Common myeloid progenitor, CD34-positive (primary cell): ENCODE measurements at regions of chr13 and their contacts with region 1.

Region 1: DNA sequence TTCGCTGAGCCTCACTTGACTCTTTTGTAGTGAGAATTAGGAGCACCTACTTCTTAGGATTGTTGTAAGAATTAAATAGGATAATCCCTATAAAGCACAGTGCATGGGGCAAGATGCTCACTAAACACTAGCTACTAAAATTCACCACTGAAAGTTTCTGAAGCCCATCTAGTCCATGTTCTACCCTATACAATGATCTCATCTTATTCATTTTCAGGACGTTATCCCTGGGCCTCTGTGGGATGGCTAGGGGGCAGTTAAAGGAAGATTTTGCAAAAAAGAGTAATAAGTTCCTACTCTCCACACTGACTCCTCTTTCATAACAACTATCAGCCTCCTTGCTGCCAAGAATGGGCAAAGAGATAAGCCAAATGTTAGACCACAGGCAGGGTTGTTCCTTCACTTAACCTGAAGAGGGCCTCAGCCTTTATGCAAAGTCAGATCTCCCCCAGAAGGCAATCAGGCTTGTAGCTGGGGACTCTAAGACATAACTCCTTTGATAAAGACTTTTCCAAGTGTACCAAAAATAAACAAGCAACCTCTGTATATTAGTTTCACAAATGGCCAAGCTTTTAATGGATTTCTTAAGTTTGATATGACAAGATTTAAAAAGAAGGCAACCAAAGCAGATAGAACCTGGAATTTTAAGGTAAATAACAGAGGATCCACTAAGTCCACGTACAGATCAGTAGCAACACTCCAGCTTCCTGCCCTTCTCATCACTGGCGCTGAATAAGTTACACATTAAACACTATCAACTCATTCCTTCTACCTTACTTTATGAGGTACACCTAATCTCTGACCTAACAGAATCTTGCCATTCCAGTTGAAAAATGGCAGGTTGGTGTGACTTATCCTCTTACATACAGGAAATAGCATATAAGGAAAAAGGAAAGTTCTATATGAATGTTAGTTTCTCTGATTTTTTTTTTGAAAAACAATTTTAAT is 44.4 kb downstream of the ELF1 start:
- DNase-seq: peak; percentile 84 to 90 (median 88)
- H3K4me3 ChIP-seq: peak overlapping the region in 4 of 7 experiments; percentile 11 to 50 (median 30)
- H3K27ac ChIP-seq: peak overlapping the region in 1 of 2 experiments; percentile 62
- H3K4me1 ChIP-seq: peaks cover 49 to 88% (median 68%) of the 10 kb centered on the region in 4 experiments
- H3K27me3 ChIP-seq: no peaks in the 10 kb centered on the region

Region 2: GRCh38 chr13:40963919-40964318 is 10.8 kb before region 1 on chr13:
- CTCF ChIA-PET with region 1: interaction called, 22 read pairs
- POLR2A ChIA-PET with region 1: interaction called, 3 read pairs
- DNase-seq: peak in 1 of 3 donors; percentile 49
- H3K4me3 ChIP-seq: no peak overlapping the region
- H3K27ac ChIP-seq: peak overlapping the region in 1 of 2 experiments; percentile 5
- H3K4me1 ChIP-seq: peaks cover 38 to 84% (median 60%) of the 10 kb centered on the region in 4 experiments
- H3K27me3 ChIP-seq: no peaks in the 10 kb centered on the region

Region 3: DNA sequence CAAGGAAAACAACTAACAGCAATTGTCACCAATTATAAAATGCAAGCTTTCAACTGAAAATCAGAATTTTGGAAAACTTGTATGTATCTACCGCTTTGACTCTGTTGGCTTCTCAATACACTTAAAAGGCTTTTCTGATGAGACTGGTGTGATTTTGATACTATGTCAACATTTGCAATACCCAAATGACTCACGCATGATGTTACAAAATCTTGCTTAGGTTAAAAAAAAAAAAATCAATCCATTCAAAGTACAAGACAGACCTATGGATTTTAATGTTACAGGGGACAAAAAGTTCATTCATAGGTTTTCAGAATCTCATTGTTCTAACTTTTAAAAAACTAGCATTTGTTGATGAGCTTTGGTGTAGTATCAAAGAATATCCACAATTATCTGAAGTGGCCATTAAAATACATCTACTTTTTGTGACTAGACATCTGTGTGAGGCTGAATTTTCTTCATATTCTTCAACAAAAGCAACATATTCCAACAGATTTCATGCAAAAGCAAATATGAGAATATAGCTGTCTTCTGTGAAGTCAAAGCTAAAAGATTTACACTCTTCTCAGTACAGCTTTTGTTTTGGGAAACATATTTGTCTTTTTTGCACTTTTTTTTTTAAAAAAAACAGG is 33.7 kb after region 1 on chr13:
- CTCF ChIA-PET with region 1: interaction called, 11 read pairs
- POLR2A ChIA-PET with region 1: interaction called, 3 read pairs
- DNase-seq: peak in 2 of 3 donors; percentile 61 to 71
- H3K4me3 ChIP-seq: peak overlapping the region in 1 of 7 experiments; percentile 47
- H3K27ac ChIP-seq: peak overlapping the region; percentile 59 to 92
- H3K4me1 ChIP-seq: peaks cover 52 to 84% (median 69%) of the 10 kb centered on the region in 4 experiments
- H3K27me3 ChIP-seq: no peaks in the 10 kb centered on the region

Region 4: DNA sequence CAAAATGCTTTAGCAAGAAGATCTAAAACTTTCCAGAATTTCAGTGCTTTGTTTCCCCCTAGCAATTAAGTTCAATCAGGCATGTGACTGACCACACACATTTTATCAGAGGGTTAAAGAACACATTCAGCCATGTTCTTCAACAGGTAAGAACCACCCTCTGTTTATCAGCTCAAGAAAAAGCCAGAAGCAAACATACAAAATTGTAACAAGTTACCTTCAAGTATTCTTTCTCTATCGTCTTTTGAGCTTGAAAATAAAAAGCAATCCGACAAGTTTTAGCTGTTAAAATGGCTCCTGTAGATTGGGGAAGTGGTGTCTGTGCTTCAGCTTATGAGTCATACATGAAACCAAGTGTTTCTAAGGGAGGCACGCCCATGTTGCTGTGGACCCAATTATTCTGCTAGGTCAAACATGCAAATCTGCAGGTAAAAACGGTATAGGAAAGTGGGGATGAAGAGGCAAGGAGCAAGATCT is 44.3 kb after region 1 on chr13 and contains the start of gene ELF1:
- CTCF ChIA-PET with region 1: interaction called, 10 read pairs
- POLR2A ChIA-PET with region 1: no interaction called
- DNase-seq: peak; percentile 92 to 96 (median 95)
- H3K4me3 ChIP-seq: peak within 1 kb of the TSS in 6 of 7 experiments; percentile 69 to 100 (median 88)
- H3K27ac ChIP-seq: peak within 1 kb of the TSS; percentile 100
- H3K4me1 ChIP-seq: peaks cover 25 to 53% (median 35%) of the 10 kb centered on the region in 4 experiments
- H3K27me3 ChIP-seq: no peaks in the 10 kb centered on the region

Region 5: DNA sequence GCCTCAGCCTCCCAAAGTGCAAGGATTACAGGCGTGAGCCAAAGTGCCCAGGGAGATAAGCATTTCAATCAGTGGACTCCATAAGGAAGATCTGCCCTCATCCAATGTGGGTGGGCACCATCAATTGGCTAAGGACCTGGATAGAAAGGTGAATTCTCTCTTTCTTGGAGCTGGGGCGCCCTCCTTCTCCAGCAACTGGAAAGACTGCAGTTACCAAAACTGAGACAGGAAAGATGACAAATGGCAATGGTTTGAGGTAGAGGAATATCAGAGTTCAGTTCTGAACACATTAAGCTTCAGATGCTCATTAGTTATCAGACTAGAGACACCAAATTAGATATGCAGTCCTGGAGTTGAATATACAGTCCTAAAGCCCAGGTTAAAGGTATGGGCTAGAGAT is 54.9 kb after region 1 on chr13:
- CTCF ChIA-PET with region 1: interaction called, 15 read pairs
- POLR2A ChIA-PET with region 1: no interaction called
- DNase-seq: peak; percentile 43 to 55 (median 52)
- H3K4me3 ChIP-seq: no peak overlapping the region
- H3K27ac ChIP-seq: no peak overlapping the region
- H3K4me1 ChIP-seq: peaks cover 3 to 16% (median 10%) of the 10 kb centered on the region in 4 experiments
- H3K27me3 ChIP-seq: no peaks in the 10 kb centered on the region

Region 6: GRCh38 chr13:41061075-41061913 is 86.6 kb after region 1 on chr13 and contains the start of gene WBP4:
- CTCF ChIA-PET with region 1: interaction called, 12 read pairs
- POLR2A ChIA-PET with region 1: no interaction called
- DNase-seq: peak; percentile 95 to 98 (median 97)
- H3K4me3 ChIP-seq: peak within 1 kb of the TSS; percentile 88 to 99 (median 94)
- H3K27ac ChIP-seq: peak within 1 kb of the TSS; percentile 85 to 94
- H3K4me1 ChIP-seq: peaks cover 25 to 47% (median 34%) of the 10 kb centered on the region in 4 experiments
- H3K27me3 ChIP-seq: no peaks in the 10 kb centered on the region

Region 7: DNA sequence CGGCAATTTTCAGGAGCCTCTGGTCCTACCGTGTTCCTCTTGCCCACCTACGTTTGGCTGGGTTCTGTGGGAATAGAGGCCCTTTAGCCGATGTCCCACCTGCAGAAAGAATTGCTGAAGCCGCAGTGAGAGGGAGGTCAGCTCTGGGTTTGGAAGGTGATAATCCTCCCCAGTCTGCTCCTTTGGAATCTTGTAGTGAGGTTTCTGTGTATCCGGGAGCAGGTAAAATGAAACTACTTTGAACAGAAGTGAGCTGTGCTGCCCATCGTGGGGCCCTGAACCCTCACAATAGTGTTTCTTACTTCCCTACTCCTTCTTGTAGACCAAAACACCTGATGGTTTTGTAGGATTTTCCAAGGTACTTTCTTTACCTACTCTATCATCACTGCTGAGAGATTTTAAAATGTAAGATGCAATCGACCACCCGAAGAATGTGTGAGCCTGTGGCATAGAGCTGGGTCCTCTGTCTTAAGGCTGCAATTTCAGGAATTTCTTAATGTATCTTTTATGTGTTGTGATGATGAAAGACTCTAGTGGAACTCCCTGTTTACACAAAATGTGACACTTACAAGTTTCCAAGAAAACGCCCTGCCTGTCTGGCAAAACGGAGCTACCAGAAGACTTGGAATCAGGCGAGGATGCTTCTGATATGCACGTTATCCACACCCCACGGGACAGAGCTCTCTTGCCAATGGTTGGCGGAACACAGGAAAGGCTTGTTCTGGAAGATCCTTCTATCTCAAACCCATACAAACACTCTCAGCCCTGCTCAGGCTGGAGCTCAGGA is 558.7 kb after region 1 on chr13:
- CTCF ChIA-PET with region 1: no interaction called
- POLR2A ChIA-PET with region 1: no interaction called
- DNase-seq: no peak
- H3K4me3 ChIP-seq: no peak overlapping the region
- H3K27ac ChIP-seq: no peak overlapping the region
- H3K4me1 ChIP-seq: no peaks in the 10 kb centered on the region
- H3K27me3 ChIP-seq: no peaks in the 10 kb centered on the region

Region 8: DNA sequence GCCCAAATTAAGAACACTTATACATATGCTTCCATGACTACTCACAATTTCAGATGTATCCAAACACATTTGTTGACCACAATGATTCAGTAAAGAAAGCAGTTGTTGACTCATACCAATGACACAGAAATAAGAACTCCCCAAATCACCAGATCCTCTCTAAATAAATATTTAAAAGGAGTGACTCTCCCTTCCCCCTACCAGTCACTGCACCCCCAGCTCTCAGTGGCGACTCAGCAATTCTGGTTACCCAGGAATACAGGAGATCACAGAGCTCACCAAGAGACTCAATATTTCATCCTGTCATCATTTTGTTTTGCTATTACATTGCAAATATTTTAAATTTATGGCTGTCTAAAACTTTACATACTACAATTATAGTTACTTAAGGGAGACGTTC is 614.2 kb after region 1 on chr13:
- CTCF ChIA-PET with region 1: no interaction called
- POLR2A ChIA-PET with region 1: no interaction called
- DNase-seq: peak; percentile 81 to 94 (median 94)
- H3K4me3 ChIP-seq: peak overlapping the region in 1 of 7 experiments; percentile 25
- H3K27ac ChIP-seq: peak overlapping the region; percentile 27 to 65
- H3K4me1 ChIP-seq: peaks cover 0 to 22% (median 8%) of the 10 kb centered on the region in 4 experiments
- H3K27me3 ChIP-seq: no peaks in the 10 kb centered on the region